Activated T-helper 1 cell treated with anti-CD3 and anti-CD28 coated beads, Interleukin-12 subunit alpha, Interleukin-12 subunit beta, Interleukin-2, Interleukin-4 antibody, amounts not matched to agents 30 ng/mL and 10 ng/mL and 1 ng/mL, durations not matched to agents 14 hours and 24 hours and 36 hours (primary cell): ENCODE measurements at regions of chr13 and their contacts with region 1.

Region 1: GRCh38 chr13:99314640-99315176 is 7.5 kb upstream of the GPR183 start:
- DNase-seq: peak; percentile 54
- H3K4me3 Mint-ChIP-seq: peak overlapping the region; percentile 57
- H3K27ac Mint-ChIP-seq: peak overlapping the region; percentile 96
- H3K4me1 Mint-ChIP-seq: peaks cover 80% of the 10 kb centered on the region
- H3K27me3 Mint-ChIP-seq: no peaks in the 10 kb centered on the region

Region 2: DNA sequence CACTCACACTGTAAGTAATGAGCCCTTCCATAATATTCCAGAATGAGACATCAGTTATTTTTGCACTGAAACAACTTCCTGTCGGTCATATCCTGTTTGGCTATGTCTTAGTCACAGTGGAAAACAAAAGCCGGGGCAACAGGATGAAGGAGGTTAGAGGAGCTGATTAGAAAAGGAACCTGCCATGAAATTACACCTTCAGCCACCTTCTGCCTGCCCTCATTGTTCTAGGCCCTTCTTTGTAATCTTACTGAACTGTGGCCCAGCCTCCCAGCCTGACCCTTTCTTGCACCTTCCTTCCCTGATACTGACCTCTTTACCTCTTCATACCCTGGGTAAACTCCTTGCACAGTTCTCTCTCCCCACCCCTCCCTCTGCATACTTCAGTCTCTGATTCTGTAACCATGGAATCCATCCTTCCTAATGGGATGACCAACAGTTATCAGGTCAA is 404.2 kb before region 1 on chr13:
- intact Hi-C with region 1: loop called (anchors 2 kb)
- DNase-seq: peak; percentile 49
- H3K4me3 Mint-ChIP-seq: peak overlapping the region; percentile 35
- H3K27ac Mint-ChIP-seq: peak overlapping the region; percentile 97
- H3K4me1 Mint-ChIP-seq: peaks cover 56% of the 10 kb centered on the region
- H3K27me3 Mint-ChIP-seq: no peaks in the 10 kb centered on the region

Region 3: DNA sequence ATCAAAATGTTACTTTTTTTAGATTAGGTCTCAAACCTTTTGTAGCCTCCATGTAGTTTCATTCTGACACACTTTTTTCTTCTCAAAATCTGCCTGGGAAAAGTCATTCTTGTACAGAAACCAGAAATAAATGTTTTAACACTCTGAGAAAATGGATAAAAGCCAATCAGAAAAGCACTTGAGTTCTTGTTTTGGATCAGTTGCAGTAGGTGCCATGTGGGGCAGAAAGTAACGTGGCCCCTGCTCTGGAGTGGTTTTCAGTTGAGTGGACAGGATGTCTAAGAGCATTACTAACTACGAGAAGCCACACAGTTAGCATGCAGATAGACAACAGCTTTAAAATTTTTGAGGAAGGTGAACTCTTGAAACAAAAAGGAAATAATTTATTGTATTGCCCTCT is 26.6 kb before region 1 on chr13:
- intact Hi-C with region 1: loop called (anchors 2 kb)
- DNase-seq: no peak
- H3K4me3 Mint-ChIP-seq: peak overlapping the region; percentile 6
- H3K27ac Mint-ChIP-seq: peak overlapping the region; percentile 50
- H3K4me1 Mint-ChIP-seq: peaks cover 61% of the 10 kb centered on the region
- H3K27me3 Mint-ChIP-seq: no peaks in the 10 kb centered on the region

Region 4: GRCh38 chr13:99356158-99357091 is 41.7 kb after region 1 on chr13:
- intact Hi-C with region 1: loop called (anchors 1 kb)
- DNase-seq: peak; percentile 74
- H3K4me3 Mint-ChIP-seq: peak overlapping the region; percentile 62
- H3K27ac Mint-ChIP-seq: peak overlapping the region; percentile 95
- H3K4me1 Mint-ChIP-seq: peaks cover 99% of the 10 kb centered on the region
- H3K27me3 Mint-ChIP-seq: peaks cover 3% of the 10 kb centered on the region

Region 5: GRCh38 chr13:99371956-99372355 is 57.2 kb after region 1 on chr13:
- intact Hi-C with region 1: loop called (anchors 2 kb)
- DNase-seq: no peak
- H3K4me3 Mint-ChIP-seq: peak overlapping the region; percentile 58
- H3K27ac Mint-ChIP-seq: peak overlapping the region; percentile 26
- H3K4me1 Mint-ChIP-seq: peaks cover 70% of the 10 kb centered on the region
- H3K27me3 Mint-ChIP-seq: peaks cover 4% of the 10 kb centered on the region